ENCODE measurements at regions of chr19 and their contacts with region 1.

Region 1: DNA sequence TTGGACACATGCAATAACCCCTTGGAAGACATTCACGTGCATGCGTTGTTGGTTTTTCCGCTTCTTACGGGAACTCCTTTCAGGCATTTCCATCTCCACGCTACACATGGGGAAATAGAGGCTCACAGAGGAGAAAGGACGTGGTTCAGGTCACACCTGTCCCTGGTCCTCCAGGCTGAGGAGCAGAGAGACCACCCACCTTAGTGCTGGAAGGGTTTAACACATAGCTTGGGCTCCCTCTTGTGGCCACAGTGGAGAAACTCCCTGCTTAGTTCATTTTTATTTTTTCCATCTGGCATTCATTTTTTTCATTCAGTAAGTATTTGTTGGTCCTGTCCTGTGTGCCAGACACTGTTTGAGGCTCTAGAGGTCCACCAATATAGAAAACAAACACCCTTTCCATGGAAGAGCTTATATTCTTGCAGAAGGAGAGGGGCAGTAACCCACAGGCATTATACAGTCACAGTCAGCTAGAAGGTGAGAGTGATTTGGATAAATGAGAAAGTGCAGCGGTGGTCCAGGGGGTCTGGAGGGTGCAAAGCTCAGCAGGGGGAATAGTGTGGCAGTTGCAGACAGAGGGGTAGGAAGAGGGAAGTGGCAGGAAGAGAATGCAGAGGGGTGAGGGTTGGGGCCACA is 24.2 kb upstream of the TTYH1 start:
- DNase-seq: peak in 1 of 2 experiments; percentile 77
- H3K4me3 ChIP-seq: peak overlapping the region in 1 of 4 experiments; percentile 25; a peak in 1 of 8 replicates
- H3K27ac ChIP-seq: no peak overlapping the region
- H3K4me1 ChIP-seq: peaks cover 0 to 9% (median 6%) of the 10 kb centered on the region in 4 experiments; a peak in 6 of 7 replicates
- H3K27me3 ChIP-seq: peaks cover 0 to 2% (median 0%) of the 10 kb centered on the region in 4 experiments; a peak in 2 of 7 replicates
- CTCF ChIP-seq: peak; percentile 46 to 80 (median 79)
- EP300 ChIP-seq: no peak
- POLR2A ChIP-seq: no peak
- RAD21 ChIP-seq: peak; percentile 80 to 85

Region 2: DNA sequence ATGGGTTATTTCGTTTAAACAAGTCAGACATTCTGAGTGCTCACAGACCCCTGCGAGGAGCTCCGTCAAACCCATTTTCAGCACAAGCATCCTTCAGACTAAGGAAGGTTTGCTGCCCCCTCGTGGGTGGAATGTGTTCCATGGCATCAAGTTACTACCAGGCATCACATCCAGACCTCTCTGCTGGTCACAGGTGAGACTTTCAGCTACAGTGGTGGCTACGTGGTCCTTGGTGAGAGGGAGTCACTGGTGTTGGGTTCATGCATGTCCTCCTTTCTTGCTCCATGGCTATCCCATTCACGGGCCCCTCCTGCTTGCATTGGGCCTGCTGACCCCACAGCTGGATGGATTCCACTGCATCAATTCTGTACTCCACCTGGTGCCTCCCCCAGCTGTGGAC is 124.9 kb before region 1 on chr19:
- CTCF ChIA-PET with region 1: interaction called, 41 read pairs
- POLR2A ChIA-PET with region 1: interaction called, 4 read pairs
- DNase-seq: peak; percentile 66 to 99
- H3K4me3 ChIP-seq: no peak overlapping the region
- H3K27ac ChIP-seq: no peak overlapping the region
- H3K4me1 ChIP-seq: peaks cover 0 to 2% (median 0%) of the 10 kb centered on the region in 4 experiments; a peak in 2 of 7 replicates
- H3K27me3 ChIP-seq: no peaks in the 10 kb centered on the region
- CTCF ChIP-seq: peak; percentile 79 to 96 (median 91)
- EP300 ChIP-seq: no peak
- POLR2A ChIP-seq: no peak
- RAD21 ChIP-seq: peak; percentile 62 to 68

Region 3: DNA sequence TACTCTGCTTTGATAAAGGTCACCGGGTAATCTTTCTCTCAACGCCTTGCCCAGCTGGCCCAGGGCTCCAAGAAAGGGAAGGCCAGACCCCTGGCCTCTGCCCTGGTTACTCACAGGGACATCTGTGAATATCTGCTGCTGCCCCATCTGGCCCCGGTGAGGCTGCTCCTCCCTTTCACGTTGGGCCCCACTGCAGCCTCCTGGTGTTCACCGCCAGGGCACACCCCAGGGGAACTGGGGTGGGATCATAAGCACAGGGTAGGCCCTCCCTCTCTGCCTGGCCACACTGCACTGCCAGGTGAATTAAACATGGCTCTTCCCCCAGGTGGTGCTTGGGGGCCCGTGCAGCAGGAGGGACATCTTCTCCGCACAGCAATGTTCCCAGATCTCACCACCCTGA is 39.0 kb before region 1 on chr19:
- CTCF ChIA-PET with region 1: interaction called, 57 read pairs
- POLR2A ChIA-PET with region 1: interaction called, 3 read pairs
- DNase-seq: no peak
- H3K4me3 ChIP-seq: no peak overlapping the region
- H3K27ac ChIP-seq: no peak overlapping the region
- H3K4me1 ChIP-seq: no peaks in the 10 kb centered on the region
- H3K27me3 ChIP-seq: no peaks in the 10 kb centered on the region
- CTCF ChIP-seq: no peak
- EP300 ChIP-seq: no peak
- POLR2A ChIP-seq: no peak
- RAD21 ChIP-seq: no peak

Region 4: DNA sequence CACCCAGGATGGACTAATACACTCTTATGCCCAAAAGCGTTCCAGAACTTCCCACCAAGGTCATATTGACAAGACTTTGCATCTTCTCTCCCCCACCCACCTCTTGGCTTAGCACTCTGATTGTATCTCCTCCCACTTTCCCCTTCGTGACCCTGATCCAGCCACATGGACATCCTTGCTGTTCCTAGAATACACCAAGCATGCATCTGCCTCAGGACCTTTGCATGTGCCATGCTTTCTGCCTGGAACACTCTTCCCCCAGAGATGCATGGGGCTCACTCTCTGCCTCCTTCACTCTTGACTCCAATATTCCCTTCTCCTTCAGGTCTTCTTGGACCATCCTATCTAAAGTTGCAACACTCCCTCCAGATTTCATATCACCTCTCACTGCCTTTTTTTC is 10.2 kb before region 1 on chr19:
- CTCF ChIA-PET with region 1: interaction called, 15 read pairs
- POLR2A ChIA-PET with region 1: interaction called, 3 read pairs
- DNase-seq: no peak
- H3K4me3 ChIP-seq: no peak overlapping the region
- H3K27ac ChIP-seq: no peak overlapping the region
- H3K4me1 ChIP-seq: no peaks in the 10 kb centered on the region
- H3K27me3 ChIP-seq: no peaks in the 10 kb centered on the region; a peak in 1 of 7 replicates
- CTCF ChIP-seq: no peak
- EP300 ChIP-seq: no peak
- POLR2A ChIP-seq: no peak
- RAD21 ChIP-seq: no peak

Region 5: DNA sequence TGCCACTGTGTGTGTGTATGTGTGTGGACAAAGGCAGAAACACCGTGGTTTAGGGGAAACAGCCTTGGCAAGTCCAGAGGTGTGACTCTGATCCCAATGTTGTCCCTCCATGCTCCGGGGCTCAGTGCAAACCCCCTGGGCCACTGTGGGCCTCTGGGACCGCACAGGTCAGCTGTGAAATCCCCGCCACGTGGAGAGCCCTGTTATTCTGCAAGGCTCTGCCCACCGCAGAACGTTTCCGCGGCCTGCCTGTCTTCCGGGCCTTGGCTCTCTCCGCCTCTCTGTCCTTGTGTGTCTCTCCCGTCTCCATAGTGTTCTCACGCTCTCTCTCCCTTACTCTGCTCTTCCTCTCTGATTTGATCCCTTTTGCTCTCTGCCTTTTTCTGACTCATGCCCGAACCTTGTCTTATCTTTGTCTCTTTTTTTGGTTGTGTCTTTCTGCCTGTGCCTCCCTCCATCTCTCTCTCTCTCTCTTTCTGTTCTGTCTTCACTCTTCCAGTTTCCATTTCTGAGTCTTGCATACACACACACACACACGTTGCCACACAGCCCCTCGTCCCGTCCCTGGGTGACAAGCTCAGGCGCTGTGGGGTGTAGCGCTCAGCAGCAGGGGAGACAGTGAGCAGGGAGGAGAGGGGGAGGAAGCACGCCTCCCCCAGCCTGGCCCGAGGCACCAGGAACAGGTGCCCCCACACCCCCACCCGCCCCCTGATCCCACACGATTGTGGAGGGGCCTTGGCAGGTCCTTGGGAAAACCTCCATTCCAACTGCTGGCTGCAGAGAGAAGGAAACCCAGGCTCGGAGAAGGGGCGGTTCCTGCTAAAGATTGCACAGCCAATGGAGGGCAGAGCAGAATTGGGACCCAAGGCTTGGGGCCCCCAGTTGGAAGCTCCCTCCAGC is 27.2 kb after region 1 on chr19:
- CTCF ChIA-PET with region 1: interaction called, 35 read pairs
- POLR2A ChIA-PET with region 1: interaction called, 9 read pairs
- DNase-seq: peak in 1 of 2 experiments; percentile 50
- H3K4me3 ChIP-seq: no peak overlapping the region
- H3K27ac ChIP-seq: no peak overlapping the region
- H3K4me1 ChIP-seq: peaks cover 15 to 50% (median 38%) of the 10 kb centered on the region in 4 experiments
- H3K27me3 ChIP-seq: peaks cover 6 to 25% (median 21%) of the 10 kb centered on the region in 4 experiments
- CTCF ChIP-seq: no peak
- EP300 ChIP-seq: no peak
- POLR2A ChIP-seq: no peak
- RAD21 ChIP-seq: no peak

Region 6: DNA sequence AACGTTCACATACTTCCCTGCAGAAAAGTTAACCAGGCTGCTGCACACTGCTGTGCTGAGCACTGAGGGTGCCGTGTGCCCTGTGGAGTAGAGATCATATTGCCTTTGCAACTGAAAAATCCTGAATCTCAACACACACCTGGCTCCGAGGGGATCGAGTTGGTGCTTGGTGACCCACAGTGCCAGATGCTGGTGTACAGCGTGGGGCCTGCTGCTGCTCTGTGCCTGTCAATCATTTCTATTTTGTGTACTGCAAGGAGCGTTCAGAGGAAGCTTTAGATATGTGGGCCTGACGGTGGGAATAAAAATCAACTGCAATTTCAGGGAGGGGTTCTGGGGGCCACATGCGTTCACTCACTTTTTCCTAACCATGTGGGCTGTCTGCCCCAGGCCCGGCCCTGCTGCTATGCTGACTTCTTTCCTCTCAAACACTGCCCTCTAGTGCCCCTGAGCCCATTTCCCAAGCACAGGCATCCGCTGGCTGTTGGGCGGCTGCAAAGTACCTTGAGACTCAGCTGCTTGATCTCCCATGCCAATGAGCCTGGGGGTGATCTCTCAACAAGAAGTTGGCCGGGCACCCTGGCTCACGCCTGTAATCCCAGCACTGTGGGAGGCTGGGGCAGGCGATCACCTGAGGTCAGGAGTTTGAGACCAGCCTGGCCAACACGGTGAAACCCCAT is 48.3 kb after region 1 on chr19:
- CTCF ChIA-PET with region 1: interaction called, 109 read pairs
- POLR2A ChIA-PET with region 1: interaction called, 7 read pairs
- DNase-seq: peak in 1 of 2 experiments; percentile 78
- H3K4me3 ChIP-seq: no peak overlapping the region; a peak in 1 of 8 replicates
- H3K27ac ChIP-seq: no peak overlapping the region
- H3K4me1 ChIP-seq: peaks cover 0 to 27% (median 20%) of the 10 kb centered on the region in 4 experiments; a peak in 6 of 7 replicates
- H3K27me3 ChIP-seq: peaks cover 0 to 2% (median 0%) of the 10 kb centered on the region in 4 experiments; a peak in 1 of 7 replicates
- CTCF ChIP-seq: peak; percentile 78 to 88 (median 82)
- EP300 ChIP-seq: no peak
- POLR2A ChIP-seq: no peak
- RAD21 ChIP-seq: peak; percentile 76 to 83

Region 7: DNA sequence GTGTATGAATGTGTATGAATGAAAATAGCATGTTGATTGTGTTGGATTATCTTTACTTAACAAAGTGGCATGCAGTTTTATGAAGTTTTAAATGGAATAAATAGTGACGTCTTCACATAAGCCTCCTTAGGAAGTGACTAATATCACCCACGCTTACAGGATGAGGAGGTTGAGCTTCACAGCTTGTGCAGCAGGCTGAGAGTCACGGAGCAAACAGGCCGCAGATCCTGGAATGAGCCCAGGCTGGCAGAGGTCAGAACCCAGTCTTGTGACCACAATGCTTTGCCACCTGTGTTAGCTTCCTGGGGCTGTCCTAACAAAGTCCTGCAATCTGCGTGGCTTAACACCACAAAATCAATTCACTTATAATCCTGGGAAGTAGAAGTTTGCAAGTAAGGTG is 132.3 kb after region 1 on chr19:
- CTCF ChIA-PET with region 1: no interaction called
- POLR2A ChIA-PET with region 1: no interaction called
- DNase-seq: no peak
- H3K4me3 ChIP-seq: no peak overlapping the region
- H3K27ac ChIP-seq: no peak overlapping the region
- H3K4me1 ChIP-seq: no peaks in the 10 kb centered on the region
- H3K27me3 ChIP-seq: no peaks in the 10 kb centered on the region
- CTCF ChIP-seq: no peak
- EP300 ChIP-seq: no peak
- POLR2A ChIP-seq: no peak
- RAD21 ChIP-seq: no peak